ENCODE measurements at regions of chr2 and their contacts with region 1.

Region 1: DNA sequence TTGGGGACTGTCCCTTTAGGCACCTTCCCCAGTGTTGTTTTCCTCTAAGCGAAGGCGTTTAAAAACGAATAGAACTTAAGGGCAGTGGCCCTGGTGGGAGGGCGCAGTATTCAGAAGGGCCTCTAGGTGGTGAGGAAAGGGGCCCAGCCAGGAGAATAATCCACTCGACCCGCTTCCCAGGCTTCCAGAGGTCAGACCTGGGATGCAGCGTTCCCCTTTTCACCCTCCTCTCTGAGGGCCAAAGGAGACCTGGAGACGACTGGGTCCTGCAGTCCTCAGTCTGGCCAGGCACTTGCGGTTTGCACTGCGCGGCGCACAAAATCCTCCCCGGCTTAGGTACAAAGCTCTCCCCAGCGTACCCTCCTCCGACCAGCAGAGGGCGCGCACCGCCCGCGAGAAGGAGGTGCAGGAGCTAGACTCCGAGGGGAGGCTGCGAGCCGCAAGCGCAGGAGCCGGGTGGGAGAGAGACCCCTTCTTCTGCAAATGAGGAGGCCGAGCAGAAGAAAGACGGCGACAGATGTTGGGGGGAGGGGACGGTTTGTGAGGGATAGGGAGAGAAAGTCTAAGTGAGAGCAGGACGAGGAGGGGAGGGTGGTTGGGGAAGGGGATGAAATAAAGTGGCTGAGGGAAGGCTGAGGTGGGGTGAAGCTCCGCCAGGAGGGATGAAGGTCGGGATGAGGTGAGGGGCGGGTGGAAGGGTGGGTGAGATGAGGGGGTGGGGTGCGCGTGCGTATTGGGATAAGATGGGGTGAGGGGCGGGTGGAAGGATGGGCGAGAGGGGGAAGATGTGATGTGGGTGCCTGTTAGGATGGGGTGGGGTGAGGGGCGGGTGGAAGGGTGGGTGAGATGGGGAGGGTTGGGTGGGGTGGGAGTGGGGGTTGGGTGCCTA is 4.9 kb downstream of the FEV start:
- DNase-seq: peak; percentile 87 to 93 (median 91)
- H3K4me3 ChIP-seq: peak overlapping the region in 4 of 7 experiments; percentile 19 to 74 (median 52)
- H3K27ac ChIP-seq: no peak overlapping the region
- H3K4me1 ChIP-seq: peaks cover 0 to 44% (median 24%) of the 10 kb centered on the region in 4 experiments
- H3K27me3 ChIP-seq: peaks cover 9 to 92% (median 32%) of the 10 kb centered on the region in 5 experiments

Region 2: DNA sequence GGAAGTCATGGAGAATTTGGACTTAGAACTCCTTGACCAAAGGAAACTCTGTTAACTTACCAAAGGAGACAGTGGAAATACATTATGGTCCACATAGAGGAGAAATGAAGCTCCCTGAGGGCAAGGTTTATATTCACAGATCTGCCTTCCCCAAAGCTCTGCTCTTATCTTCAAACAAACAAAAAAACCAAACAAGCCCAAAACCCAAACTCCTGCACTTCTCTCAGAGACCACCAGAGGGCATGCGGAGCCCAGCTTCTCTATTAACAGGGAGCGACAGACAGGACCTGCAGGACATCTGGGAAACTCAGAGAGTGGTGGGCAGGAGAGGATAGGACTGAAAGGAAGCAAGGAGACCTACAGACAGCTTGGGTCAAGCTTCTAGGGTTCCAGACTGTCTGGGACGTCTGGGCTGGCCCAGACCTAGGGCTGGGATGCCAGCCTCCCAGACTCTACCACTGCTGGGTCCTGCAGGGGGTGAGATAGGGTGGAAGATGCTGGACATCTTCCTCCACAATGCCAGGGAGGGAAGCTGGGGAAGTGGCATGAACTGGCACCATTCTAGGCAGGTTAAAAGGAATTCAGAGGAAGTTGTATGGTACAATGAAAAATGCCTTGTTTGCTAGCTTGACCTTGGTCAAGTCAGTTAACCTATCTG is 103.4 kb before region 1 on chr2:
- CTCF ChIA-PET with region 1: interaction called, 27 read pairs
- POLR2A ChIA-PET with region 1: no interaction called
- DNase-seq: peak; percentile 68 to 84 (median 74)
- H3K4me3 ChIP-seq: no peak overlapping the region
- H3K27ac ChIP-seq: no peak overlapping the region
- H3K4me1 ChIP-seq: peaks cover 0 to 42% (median 24%) of the 10 kb centered on the region in 4 experiments
- H3K27me3 ChIP-seq: peaks cover 13 to 99% (median 61%) of the 10 kb centered on the region in 5 experiments

Region 3: GRCh38 chr2:218995972-218996711 is 16.1 kb after region 1 on chr2:
- CTCF ChIA-PET with region 1: interaction called, 48 read pairs
- POLR2A ChIA-PET with region 1: interaction called, 3 read pairs
- DNase-seq: peak; percentile 75 to 83 (median 81)
- H3K4me3 ChIP-seq: peak overlapping the region in 3 of 7 experiments; percentile 41 to 54 (median 46)
- H3K27ac ChIP-seq: no peak overlapping the region
- H3K4me1 ChIP-seq: peaks cover 0 to 24% (median 16%) of the 10 kb centered on the region in 4 experiments
- H3K27me3 ChIP-seq: peaks cover 9 to 98% (median 68%) of the 10 kb centered on the region in 5 experiments

Region 4: DNA sequence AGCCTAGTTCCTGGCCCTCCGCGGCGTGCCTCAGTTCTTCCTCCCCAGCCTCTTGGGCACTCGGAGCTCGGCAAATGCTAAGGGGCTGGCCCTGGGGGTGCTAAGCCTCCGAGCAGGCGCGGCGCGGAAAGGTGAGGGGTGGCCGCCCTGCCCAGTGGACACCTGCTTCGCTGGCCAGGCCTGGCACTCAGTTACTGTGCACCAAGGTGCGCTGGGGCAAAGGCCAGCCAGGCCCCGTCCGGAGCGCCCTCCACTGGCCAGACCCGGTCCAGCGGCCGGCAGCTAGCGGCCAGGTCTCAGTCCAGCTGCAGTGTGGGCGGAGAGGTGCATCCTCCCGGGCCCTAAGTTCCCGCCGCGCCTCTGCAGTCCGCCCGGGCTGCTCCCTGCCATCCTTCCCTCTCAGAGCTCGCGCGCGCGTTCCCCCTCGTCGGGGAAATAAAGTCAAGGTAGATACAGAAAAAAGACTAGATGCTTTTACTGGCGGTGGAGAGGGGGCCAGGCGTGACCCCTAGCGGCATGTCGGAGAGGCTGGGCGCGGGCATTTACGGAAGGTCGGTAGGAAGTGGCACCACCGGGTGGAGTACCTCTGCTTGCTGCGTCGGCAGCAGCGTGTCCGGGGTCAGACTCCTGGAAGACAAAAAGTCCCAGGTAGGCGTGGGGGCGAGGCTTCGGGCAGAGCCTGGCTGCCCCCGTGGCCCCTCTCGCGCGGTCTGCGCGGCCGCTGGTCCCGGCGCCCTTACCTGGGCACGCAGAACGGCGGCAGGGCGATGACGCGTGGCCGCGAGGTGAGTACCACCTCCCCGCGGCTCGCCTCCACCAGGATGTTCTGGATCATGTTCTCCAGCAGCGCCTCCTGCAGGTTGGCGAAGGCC is 22.5 kb after region 1 on chr2:
- CTCF ChIA-PET with region 1: interaction called, 16 read pairs
- POLR2A ChIA-PET with region 1: no interaction called
- DNase-seq: peak; percentile 53 to 75 (median 74)
- H3K4me3 ChIP-seq: peak overlapping the region in 2 of 7 experiments; percentile 60 to 66
- H3K27ac ChIP-seq: no peak overlapping the region
- H3K4me1 ChIP-seq: peaks cover 0 to 23% (median 14%) of the 10 kb centered on the region in 4 experiments
- H3K27me3 ChIP-seq: peaks cover 0 to 98% (median 48%) of the 10 kb centered on the region in 5 experiments

Region 5: DNA sequence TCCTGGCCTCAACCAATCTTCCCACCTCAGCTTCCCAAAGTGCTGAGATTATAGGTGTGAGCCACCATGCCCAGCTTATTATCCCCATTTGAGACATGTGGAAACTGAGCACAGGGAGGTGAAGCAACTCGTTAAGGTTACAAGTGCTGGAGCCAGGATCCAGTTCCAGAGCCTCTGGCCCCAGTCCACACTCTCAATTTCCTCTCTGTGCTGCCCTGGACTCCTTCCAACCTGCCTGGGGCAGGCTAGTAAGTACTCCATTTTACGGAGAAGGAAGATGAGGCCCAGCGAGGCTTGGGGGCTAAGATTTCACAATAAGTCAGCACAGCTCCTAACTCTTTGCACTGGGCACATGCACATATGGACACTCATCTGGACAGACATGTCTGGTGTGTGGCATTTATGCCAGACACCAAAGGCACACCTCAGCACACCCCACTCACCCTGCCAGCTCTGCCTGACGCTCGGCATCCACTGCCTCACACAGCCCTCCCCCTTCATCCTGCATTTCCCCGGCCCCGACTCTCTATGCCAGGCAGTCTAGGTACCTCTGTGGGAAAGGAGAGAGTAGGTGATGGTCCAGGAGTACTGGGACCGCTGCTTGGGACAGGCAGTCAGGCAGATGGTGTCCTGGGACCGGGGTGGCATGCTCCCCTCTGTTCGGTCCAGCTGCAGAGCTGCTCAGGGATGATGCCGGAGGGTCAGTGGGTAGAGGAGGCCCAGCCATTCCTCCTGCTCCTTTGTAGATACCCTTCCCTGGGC is 40.7 kb after region 1 on chr2:
- CTCF ChIA-PET with region 1: no interaction called
- POLR2A ChIA-PET with region 1: no interaction called
- DNase-seq: no peak
- H3K4me3 ChIP-seq: no peak overlapping the region
- H3K27ac ChIP-seq: no peak overlapping the region
- H3K4me1 ChIP-seq: no peaks in the 10 kb centered on the region
- H3K27me3 ChIP-seq: peaks cover 0 to 18% (median 0%) of the 10 kb centered on the region in 5 experiments

Region 6: GRCh38 chr2:219127037-219127635 is 147.0 kb after region 1 on chr2:
- CTCF ChIA-PET with region 1: no interaction called
- POLR2A ChIA-PET with region 1: no interaction called
- DNase-seq: no peak
- H3K4me3 ChIP-seq: no peak overlapping the region
- H3K27ac ChIP-seq: no peak overlapping the region
- H3K4me1 ChIP-seq: peaks cover 0 to 24% (median 7%) of the 10 kb centered on the region in 4 experiments
- H3K27me3 ChIP-seq: no peaks in the 10 kb centered on the region

Measured in common myeloid progenitor, CD34-positive (primary cell).